HEK293 (cell line): ENCODE measurements at regions of chr15 and their contacts with region 1.

Region 1: GRCh38 chr15:47717036-47717611 is at the start of gene SEMA6D:
- H3K4me3 ChIP-seq: peak within 1 kb of the TSS; percentile 54
- H3K27ac ChIP-seq: peak within 1 kb of the TSS; percentile 79
- H3K4me1 ChIP-seq: peaks cover 7% of the 10 kb centered on the region
- CTCF ChIP-seq: peak; percentile 44; the same call in 1 of the 2 replicates

Region 2: DNA sequence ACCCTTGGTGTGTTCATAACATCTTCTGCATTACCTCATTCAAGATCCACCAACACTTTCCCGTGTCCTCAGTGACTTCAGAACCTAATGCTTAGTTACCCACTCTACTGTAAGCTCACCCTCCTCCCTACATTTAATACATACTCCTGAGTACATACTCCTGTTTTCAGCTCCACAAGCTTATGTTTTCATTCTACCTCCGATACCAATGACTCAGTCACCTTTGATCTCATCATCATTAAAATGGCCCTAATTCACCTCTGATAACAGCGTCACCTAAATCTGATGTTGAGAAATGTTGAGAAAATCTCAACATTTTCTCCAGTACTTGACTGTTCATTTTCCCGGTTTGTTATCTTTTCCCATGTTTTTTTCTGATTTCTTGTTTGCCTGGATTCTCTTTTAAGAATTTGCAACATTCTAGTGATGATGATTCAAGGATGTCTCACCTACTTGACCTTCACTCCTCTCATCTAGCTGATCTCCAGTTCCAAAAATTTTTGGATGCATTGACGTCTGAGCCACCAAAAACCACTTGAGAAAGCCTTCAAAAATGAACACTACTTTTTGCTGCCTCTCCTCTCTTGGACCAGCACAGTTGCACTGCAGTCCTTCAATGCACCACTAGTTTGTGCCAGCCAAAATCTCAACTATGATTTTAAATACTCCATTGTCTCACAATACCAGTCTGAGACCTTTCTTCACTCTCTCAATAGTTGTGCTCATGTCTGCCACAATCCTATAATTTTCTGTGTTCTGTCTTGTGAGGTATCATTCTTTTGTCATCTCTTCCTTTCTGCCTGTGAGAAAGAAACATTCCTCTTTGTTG is 220.6 kb before region 1 on chr15:
- CTCF ChIA-PET with region 1: no interaction called
- POLR2A ChIA-PET with region 1: no interaction called
- H3K4me3 ChIP-seq: no peak overlapping the region
- H3K27ac ChIP-seq: no peak overlapping the region
- H3K4me1 ChIP-seq: no peaks in the 10 kb centered on the region
- CTCF ChIP-seq: no peak

Region 3: GRCh38 chr15:47727676-47728075 is 10.6 kb after region 1 on chr15:
- CTCF ChIA-PET with region 1: interaction called, 6 read pairs
- POLR2A ChIA-PET with region 1: interaction called, 11 read pairs
- H3K4me3 ChIP-seq: no peak overlapping the region
- H3K27ac ChIP-seq: no peak overlapping the region; the same call in 1 of the 2 replicates
- H3K4me1 ChIP-seq: peaks cover 10% of the 10 kb centered on the region
- CTCF ChIP-seq: no peak

Region 4: DNA sequence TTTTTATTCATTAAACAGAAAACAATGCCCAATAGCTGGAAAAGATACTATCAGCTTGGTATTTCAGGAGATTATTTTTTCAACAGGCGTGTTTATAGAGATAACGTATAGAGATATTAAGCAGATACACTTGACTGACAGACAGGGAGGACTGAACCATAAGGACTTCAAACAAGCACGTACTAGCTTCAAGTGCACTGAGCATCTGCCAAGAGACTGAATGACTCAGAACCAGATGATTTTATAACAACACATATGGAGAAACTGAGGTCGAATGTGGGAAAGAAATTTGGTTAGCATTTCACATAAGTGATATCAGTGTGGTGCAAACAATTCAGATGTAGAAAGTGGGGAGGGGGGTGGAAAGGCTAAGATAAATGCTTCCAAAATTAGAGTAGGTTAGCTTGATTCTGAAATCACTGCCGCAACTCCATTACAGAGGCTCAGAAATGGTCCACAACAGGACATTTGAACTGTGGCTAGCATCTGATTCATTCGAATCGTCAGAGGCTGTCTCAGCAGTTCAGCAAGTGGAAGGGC is 103.7 kb after region 1 on chr15:
- CTCF ChIA-PET with region 1: no interaction called
- POLR2A ChIA-PET with region 1: no interaction called
- H3K4me3 ChIP-seq: no peak overlapping the region
- H3K27ac ChIP-seq: no peak overlapping the region
- H3K4me1 ChIP-seq: no peaks in the 10 kb centered on the region
- CTCF ChIP-seq: no peak

Region 5: DNA sequence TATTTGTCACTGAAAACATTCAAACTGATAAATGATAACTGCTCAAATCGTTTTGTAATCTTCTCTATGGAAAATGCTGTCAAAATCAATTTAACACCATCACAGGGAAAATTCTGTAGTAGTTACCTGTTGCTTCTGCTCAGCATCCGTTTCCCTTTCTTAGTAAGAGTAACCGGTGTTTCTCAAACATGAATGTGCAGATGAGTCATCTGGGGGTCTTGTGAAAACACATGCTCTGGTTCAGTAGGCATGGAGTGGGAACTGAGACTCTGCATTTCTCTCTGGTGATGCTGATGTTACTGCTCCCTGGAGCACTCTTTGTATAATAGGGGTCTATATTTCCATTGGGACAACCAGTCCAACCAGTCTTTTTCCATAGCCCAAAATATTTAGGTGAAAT is 145.3 kb after region 1 on chr15:
- CTCF ChIA-PET with region 1: no interaction called
- POLR2A ChIA-PET with region 1: no interaction called
- H3K4me3 ChIP-seq: no peak overlapping the region
- H3K27ac ChIP-seq: no peak overlapping the region
- H3K4me1 ChIP-seq: no peaks in the 10 kb centered on the region
- CTCF ChIP-seq: no peak